ENCODE measurements at regions of chr6 and their contacts with region 1.

Region 1: DNA sequence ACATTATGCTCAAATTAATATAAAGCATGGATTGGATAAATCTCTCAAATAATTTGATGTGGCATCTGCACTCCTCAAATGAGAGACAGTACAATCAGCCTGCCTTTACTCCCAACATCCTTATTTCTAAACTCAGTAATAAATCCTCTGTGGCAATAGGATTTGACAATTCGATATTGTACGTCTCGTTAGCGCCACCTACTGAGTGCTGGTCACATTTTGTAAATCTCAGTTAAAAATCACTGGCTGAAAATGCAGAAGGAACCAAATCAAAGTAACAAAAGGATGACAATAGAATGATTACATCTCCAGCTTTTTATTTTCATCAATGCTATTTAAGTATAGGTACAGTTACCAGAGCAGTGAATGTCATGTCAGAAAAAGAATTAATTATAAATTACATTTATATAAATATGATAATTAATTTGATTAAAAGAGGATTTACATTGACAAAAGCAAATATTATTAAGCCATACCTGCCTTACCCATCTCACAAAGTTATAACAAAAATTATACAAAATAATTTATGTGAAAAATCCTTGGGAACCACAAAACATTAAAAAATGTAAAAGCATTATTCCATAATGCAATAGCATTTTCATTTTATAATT is 20.2 kb upstream of the GJE1 start:
- DNase-seq: peak; percentile 75 to 83
- ATAC-seq: no peak
- H3K4me3 ChIP-seq: no peak overlapping the region
- H3K27ac ChIP-seq: no peak overlapping the region
- H3K4me1 ChIP-seq: no peaks in the 10 kb centered on the region
- H3K27me3 ChIP-seq: no peaks in the 10 kb centered on the region

Region 2: DNA sequence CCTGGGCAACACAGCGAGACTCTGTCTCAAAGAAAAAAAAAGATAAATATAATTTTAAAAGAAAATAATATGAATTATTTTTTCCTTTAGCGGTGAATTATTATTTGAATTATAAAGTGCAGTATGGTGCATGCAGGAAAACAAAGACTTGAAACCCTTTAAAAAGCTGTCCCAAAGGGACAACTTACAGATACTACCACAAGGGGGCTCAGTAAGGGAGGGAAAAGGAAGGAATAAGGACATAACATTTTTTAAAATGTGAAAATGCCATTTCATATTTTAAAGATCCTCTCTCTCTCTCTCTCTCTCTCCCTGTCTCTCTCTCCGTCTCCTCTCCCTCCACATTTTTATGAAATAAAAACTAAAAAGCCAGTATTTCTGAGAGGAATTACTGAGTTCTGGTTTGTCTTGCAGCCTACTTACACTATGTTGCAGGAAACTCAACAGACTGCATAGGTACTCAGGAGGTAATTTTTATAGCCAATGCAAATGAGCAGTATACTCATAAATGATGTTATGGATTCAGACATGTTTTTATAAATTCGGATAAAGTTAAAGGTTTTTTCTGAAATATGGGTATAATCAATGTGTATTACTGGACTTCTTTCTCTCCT is 434.9 kb before region 1 on chr6:
- intact Hi-C with region 1: loop called (anchors 10 kb)
- DNase-seq: no peak
- ATAC-seq: no peak
- H3K4me3 ChIP-seq: no peak overlapping the region
- H3K27ac ChIP-seq: no peak overlapping the region
- H3K4me1 ChIP-seq: no peaks in the 10 kb centered on the region
- H3K27me3 ChIP-seq: no peaks in the 10 kb centered on the region

Region 3: GRCh38 chr6:141688916-141689315 is 423.6 kb before region 1 on chr6:
- intact Hi-C with region 1: loop called in 1 of 2 experiments (anchors 10 kb)
- DNase-seq: no peak
- ATAC-seq: no peak
- H3K4me3 ChIP-seq: no peak overlapping the region
- H3K27ac ChIP-seq: no peak overlapping the region
- H3K4me1 ChIP-seq: no peaks in the 10 kb centered on the region
- H3K27me3 ChIP-seq: no peaks in the 10 kb centered on the region

Region 4: DNA sequence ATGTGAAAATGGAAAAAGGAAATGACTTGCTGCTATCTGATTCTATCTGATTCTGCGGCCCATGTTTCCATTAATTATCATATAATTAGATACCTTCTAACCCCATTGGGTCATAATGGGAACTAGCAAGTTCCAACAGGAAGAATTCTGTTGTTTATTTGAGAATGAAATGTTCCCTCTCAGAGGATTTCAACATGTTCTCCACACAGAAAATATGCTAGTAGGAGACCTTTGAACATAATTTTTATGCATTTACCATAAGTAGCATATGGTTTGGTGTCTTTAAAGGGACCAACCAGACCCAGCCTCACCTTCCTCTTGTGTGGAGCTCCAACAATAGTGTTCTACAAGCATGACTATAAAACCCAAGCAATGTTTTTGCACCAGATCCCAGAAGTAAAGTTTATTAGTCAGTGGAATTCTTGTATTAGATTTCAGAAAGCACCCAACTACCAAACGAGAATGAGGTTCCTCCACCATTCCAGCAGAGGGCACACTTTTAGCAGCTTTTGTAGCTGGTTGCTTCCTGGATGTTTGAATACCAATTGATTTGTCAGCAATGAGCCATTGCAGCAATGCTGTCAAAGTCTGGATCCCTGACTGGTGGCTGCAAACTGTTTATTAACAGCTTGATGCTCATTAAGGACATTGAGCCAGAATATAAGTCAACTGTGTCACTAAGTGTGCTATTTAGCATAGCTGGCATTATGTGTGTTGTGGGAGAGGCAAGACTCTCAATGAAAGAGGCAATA is 123.4 kb before region 1 on chr6:
- intact Hi-C with region 1: loop called in 1 of 2 experiments (anchors 5 kb)
- DNase-seq: no peak
- ATAC-seq: no peak
- H3K4me3 ChIP-seq: no peak overlapping the region
- H3K27ac ChIP-seq: no peak overlapping the region
- H3K4me1 ChIP-seq: no peaks in the 10 kb centered on the region
- H3K27me3 ChIP-seq: no peaks in the 10 kb centered on the region

Region 5: GRCh38 chr6:142275251-142276006 is 162.9 kb after region 1 on chr6:
- intact Hi-C with region 1: no loop called
- DNase-seq: no peak
- ATAC-seq: no peak
- H3K4me3 ChIP-seq: no peak overlapping the region
- H3K27ac ChIP-seq: no peak overlapping the region
- H3K4me1 ChIP-seq: peaks cover 0 to 4% of the 10 kb centered on the region in 2 donors
- H3K27me3 ChIP-seq: no peaks in the 10 kb centered on the region

Region 6: GRCh38 chr6:142444881-142445301 is 332.3 kb after region 1 on chr6:
- intact Hi-C with region 1: no loop called
- DNase-seq: no peak
- ATAC-seq: no peak
- H3K4me3 ChIP-seq: no peak overlapping the region
- H3K27ac ChIP-seq: no peak overlapping the region
- H3K4me1 ChIP-seq: peaks cover 0 to 3% of the 10 kb centered on the region in 2 donors
- H3K27me3 ChIP-seq: no peaks in the 10 kb centered on the region

Region 7: GRCh38 chr6:143313163-143313562 is 1200.6 kb after region 1 on chr6:
- intact Hi-C with region 1: no loop called
- DNase-seq: no peak
- ATAC-seq: no peak
- H3K4me3 ChIP-seq: no peak overlapping the region
- H3K27ac ChIP-seq: no peak overlapping the region
- H3K4me1 ChIP-seq: no peaks in the 10 kb centered on the region
- H3K27me3 ChIP-seq: no peaks in the 10 kb centered on the region